ENCODE measurements at regions of chr22 and their contacts with region 1.

Region 1: GRCh38 chr22:19143967-19144400 is 467 bp downstream of the ESS2 start:
- DNase-seq: no peak
- ATAC-seq: no peak
- H3K4me3 Mint-ChIP-seq: peak overlapping the region; percentile 100
- H3K27ac Mint-ChIP-seq: peak overlapping the region; percentile 95
- H3K4me1 Mint-ChIP-seq: peaks cover 20% of the 10 kb centered on the region
- H3K27me3 Mint-ChIP-seq: peaks cover 13% of the 10 kb centered on the region
- CTCF ChIP-seq: no peak

Region 2: GRCh38 chr22:18998998-18999397 is 145.0 kb before region 1 on chr22:
- CTCF ChIA-PET with region 1: no interaction called
- POLR2A ChIA-PET with region 1: no interaction called
- intact Hi-C with region 1: no loop called
- DNase-seq: no peak
- ATAC-seq: no peak
- H3K4me3 Mint-ChIP-seq: no peak overlapping the region
- H3K27ac Mint-ChIP-seq: no peak overlapping the region
- H3K4me1 Mint-ChIP-seq: no peaks in the 10 kb centered on the region
- H3K27me3 Mint-ChIP-seq: peaks cover 31% of the 10 kb centered on the region
- CTCF ChIP-seq: no peak

Region 3: GRCh38 chr22:19052941-19053541 is 90.9 kb before region 1 on chr22:
- CTCF ChIA-PET with region 1: no interaction called
- POLR2A ChIA-PET with region 1: no interaction called
- intact Hi-C with region 1: no loop called
- DNase-seq: no peak
- ATAC-seq: no peak
- H3K4me3 Mint-ChIP-seq: no peak overlapping the region
- H3K27ac Mint-ChIP-seq: no peak overlapping the region
- H3K4me1 Mint-ChIP-seq: no peaks in the 10 kb centered on the region
- H3K27me3 Mint-ChIP-seq: no peaks in the 10 kb centered on the region
- CTCF ChIP-seq: no peak

Region 4: DNA sequence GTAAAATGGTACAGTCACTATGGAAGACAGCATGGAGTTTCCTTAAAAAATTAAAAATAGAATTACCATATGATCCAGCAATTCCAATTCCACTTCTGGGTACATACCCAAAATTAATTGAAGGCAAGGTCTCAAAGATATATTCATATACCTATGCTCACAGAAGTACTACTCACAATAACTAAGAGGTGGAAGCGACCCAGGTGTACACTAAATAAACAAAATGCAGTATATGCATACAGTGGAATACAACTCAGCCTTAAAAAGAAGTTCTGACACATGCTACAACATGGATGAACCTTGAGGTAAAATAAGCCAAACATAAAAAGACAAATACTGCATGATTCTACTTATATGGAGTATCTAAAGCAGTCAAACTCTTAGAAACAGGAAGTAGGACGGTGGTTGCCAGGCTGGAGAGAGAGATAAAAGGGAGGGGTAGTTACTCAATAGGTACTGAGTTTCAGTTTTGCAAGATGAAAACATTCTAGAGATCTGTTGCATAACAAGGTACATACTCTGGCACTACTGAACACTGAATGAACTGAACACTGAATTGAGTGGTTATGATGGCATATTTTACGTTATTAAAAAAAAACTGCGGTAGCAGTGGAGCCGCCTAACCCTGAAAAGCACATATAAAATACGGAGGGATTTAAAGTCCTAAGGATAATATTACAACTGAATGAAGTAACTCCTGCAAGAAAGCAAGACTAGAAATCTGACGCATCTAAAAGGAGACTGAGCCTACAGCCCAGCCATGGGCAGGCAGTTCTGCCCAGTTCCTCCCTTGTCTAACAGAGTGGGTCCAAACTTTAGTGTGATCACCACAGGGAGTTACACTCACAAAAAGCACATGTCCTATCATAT is 34.6 kb before region 1 on chr22:
- CTCF ChIA-PET with region 1: interaction called, 3 read pairs
- POLR2A ChIA-PET with region 1: no interaction called
- intact Hi-C with region 1: loop called (anchors 1 kb)
- DNase-seq: no peak
- ATAC-seq: peak; percentile 95
- H3K4me3 Mint-ChIP-seq: peak overlapping the region; percentile 67
- H3K27ac Mint-ChIP-seq: peak overlapping the region; percentile 85
- H3K4me1 Mint-ChIP-seq: peaks cover 60% of the 10 kb centered on the region
- H3K27me3 Mint-ChIP-seq: no peaks in the 10 kb centered on the region
- CTCF ChIP-seq: no peak

Region 5: DNA sequence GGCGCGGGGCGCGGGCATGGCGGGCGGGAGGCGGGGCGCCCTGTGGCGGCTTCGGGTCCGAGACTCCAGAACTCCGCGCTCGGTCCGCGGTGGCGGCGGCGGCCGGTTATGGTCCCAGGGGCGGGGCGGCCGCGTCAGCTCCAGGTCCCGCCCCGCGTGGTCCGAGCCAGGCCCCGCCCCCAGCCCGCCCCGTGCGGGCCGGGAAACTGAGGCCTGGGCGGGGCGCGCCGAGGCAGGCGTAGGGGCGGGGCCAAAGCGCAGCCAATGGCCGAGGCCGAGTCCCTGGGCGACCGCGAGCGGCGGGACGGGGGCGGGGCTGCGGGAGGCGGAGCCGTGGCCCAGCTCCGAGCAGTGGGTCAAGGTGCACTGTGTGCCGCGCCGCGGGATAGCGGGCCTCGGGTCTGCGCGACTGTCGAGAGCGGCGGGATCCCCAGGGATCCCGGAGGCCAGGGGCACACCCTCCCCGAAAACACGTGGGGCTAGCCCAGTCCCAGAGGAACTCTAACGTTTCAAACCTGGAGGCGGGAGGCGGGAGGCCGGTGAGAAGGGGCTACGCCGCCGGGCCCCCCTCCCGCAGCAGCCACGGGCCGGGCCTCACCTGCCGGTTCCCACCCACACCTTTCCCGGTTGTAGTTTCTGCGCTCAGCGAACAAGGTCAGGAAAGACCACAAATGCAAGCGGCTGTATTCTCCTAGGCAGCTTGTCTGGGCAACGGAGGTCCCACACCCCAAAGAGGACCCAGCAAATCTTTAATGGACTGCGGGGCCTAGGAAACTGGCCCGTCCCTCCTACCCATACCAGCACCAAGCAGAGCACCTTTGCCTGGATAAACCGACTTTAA is 34.9 kb after region 1 on chr22 and contains the start of gene SLC25A1:
- CTCF ChIA-PET with region 1: interaction called, 7 read pairs
- POLR2A ChIA-PET with region 1: interaction called, 11 read pairs
- intact Hi-C with region 1: loop called (anchors 1 kb)
- DNase-seq: peak; percentile 84
- ATAC-seq: peak; percentile 75
- H3K4me3 Mint-ChIP-seq: peak within 1 kb of the TSS; percentile 85
- H3K27ac Mint-ChIP-seq: peak within 1 kb of the TSS; percentile 68
- H3K4me1 Mint-ChIP-seq: peaks cover 27% of the 10 kb centered on the region
- H3K27me3 Mint-ChIP-seq: no peaks in the 10 kb centered on the region
- CTCF ChIP-seq: no peak
- total RNA-seq, gene SLC25A1: 44.2 and 44.6 TPM in 2 replicates

Region 6: DNA sequence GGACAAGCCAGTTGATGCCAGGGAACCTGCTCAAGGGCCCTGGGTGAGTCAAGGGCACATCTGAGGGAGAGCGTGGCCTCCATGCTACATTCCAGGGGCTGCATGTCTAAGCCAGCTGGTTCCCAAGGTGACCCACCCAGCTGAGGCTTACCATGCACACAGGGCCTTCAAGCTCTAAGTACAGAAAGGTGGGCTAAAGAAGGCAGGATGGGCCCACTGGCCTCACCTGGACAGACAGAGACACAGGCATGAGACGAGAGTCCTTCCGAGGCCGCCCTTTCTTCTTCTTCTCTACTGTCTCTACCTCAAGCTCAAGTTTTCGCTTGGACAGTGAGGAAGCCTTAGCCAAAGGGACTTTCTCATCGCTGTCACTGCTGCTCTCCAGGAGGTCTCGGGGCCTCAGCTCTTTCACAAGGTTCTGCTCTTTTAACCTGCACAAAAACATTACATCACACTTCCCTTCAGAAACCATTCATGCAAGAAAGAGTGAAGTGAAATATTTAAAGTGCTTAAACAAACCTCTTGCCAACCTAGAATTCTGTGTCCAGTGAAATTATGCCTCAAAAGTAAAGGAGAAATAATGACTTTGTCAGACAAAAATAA is 217.6 kb after region 1 on chr22:
- CTCF ChIA-PET with region 1: no interaction called
- POLR2A ChIA-PET with region 1: interaction called, 4 read pairs
- intact Hi-C with region 1: loop called (anchors 2 kb)
- DNase-seq: peak; percentile 41
- ATAC-seq: peak; percentile 90
- H3K4me3 Mint-ChIP-seq: peak overlapping the region; percentile 71
- H3K27ac Mint-ChIP-seq: peak overlapping the region; percentile 95
- H3K4me1 Mint-ChIP-seq: peaks cover 80% of the 10 kb centered on the region
- H3K27me3 Mint-ChIP-seq: no peaks in the 10 kb centered on the region
- CTCF ChIP-seq: no peak

Region 7: DNA sequence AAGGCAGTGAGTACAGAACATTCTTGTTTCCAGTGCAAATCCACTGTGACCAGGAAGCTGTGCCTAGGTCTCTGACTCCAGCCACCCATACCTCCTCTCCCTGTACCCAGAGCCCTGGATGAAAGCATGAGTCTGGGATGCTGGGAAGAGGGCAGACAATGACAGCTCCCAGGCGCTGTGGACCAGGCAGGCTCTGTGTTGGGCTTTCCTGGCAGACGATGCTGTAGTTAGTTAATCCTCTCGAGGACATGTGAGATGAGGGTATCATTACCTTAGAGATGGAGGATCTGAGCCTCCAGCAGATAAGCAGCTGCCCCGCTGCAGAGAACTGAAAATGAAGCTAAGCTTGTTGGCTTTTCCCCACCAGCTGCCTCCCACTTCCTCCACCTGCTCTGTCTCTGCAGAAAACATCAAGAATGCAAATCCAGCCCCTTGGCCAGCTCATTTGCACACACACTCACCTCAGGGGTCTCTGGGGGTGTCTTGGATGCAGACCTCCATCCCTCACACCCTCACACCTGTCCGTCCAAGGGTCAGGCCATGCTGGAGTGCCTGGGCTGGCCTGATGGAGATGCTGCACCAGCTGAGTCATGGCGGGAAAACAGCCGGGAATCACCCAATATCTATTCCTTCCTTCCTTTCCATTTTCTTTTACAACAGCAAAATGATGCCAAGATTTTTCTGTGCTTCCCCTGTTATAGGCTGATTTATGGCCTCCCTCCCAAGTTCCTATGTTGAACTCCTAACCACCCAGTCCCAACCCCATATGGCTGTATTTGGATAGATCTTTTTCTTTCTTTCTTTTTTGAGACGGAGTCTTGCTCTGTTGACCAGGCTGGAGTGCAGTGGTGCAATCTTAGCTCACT is 475.4 kb after region 1 on chr22:
- CTCF ChIA-PET with region 1: no interaction called
- POLR2A ChIA-PET with region 1: no interaction called
- intact Hi-C with region 1: loop called (anchors 2 kb)
- DNase-seq: peak; percentile 31
- ATAC-seq: peak; percentile 43
- H3K4me3 Mint-ChIP-seq: peak overlapping the region; percentile 57
- H3K27ac Mint-ChIP-seq: peak overlapping the region; percentile 13
- H3K4me1 Mint-ChIP-seq: peaks cover 59% of the 10 kb centered on the region
- H3K27me3 Mint-ChIP-seq: peaks cover 20% of the 10 kb centered on the region
- CTCF ChIP-seq: no peak

Region 8: GRCh38 chr22:19717691-19718455 is 573.9 kb after region 1 on chr22:
- CTCF ChIA-PET with region 1: interaction called, 3 read pairs
- POLR2A ChIA-PET with region 1: no interaction called
- intact Hi-C with region 1: loop called (anchors 1 kb)
- DNase-seq: peak; percentile 85
- ATAC-seq: peak; percentile 97
- H3K4me3 Mint-ChIP-seq: peak overlapping the region; percentile 78
- H3K27ac Mint-ChIP-seq: no peak overlapping the region
- H3K4me1 Mint-ChIP-seq: peaks cover 11% of the 10 kb centered on the region
- H3K27me3 Mint-ChIP-seq: peaks cover 44% of the 10 kb centered on the region
- CTCF ChIP-seq: peak; percentile 34

Measured in activated B cell treated with CpG ODN at 0.5 μM for 24 hours (primary cell).